ENCODE measurements at regions of chr5 and their contacts with region 1.

Region 1: GRCh38 chr5:76521240-76521758 is 101.9 kb downstream of the F2RL2 start:
- DNase-seq: no peak
- H3K4me3 ChIP-seq: no peak overlapping the region
- H3K4me3 Mint-ChIP-seq: peak overlapping the region; percentile 8 to 68 (median 24)
- H3K27ac ChIP-seq: no peak overlapping the region
- H3K27ac Mint-ChIP-seq: peak overlapping the region; percentile 57 to 90 (median 80)
- H3K4me1 ChIP-seq: peaks cover 57% of the 10 kb centered on the region
- H3K4me1 Mint-ChIP-seq: peaks cover 52 to 84% (median 70%) of the 10 kb centered on the region in 4 donors
- H3K27me3 ChIP-seq: no peaks in the 10 kb centered on the region
- H3K27me3 Mint-ChIP-seq: no peaks in the 10 kb centered on the region

Region 2: DNA sequence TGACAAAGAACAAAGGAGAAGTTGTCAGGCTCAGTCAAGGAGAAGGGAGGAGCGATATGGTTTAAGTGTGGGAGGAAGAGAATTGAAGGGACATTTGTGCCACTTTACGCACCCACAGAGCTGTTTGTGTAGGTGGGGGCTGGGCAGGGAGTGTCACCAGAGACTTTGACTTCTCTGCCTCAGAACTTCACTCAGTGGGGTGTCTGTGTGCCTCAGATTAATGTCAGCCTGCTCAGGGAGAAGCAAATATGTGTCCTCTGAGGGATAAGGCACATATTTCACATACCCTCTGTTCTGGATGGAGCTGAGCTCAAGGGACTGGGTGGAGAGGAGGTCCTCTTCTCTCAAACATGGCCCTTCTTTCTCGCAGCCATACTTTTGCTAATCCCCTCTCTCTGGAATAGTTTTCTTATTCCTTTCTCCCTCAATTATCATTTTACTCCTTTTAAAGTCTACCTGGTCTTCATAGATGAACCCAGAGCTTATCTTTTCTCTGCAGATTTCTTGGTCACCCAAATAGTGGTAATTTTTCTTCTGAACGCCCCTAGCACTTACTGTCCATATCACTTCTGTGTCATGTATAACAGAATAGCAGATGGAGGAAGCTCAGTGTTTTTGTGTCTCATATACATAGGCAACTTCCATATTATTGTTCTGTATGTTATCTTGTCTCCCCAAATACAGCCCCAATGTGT is 41.2 kb before region 1 on chr5:
- CTCF ChIA-PET with region 1: no interaction called
- POLR2A ChIA-PET with region 1: no interaction called
- intact Hi-C with region 1: loop called (anchors 5 kb)
- DNase-seq: no peak
- H3K4me3 ChIP-seq: no peak overlapping the region
- H3K4me3 Mint-ChIP-seq: peak overlapping the region in 2 of 8 donors; percentile 1 to 8
- H3K27ac ChIP-seq: no peak overlapping the region
- H3K27ac Mint-ChIP-seq: peak overlapping the region in 6 of 7 donors; percentile 3 to 89 (median 16)
- H3K4me1 ChIP-seq: peaks cover 64% of the 10 kb centered on the region
- H3K4me1 Mint-ChIP-seq: peaks cover 50 to 85% (median 67%) of the 10 kb centered on the region in 4 donors
- H3K27me3 ChIP-seq: no peaks in the 10 kb centered on the region
- H3K27me3 Mint-ChIP-seq: no peaks in the 10 kb centered on the region

Region 3: DNA sequence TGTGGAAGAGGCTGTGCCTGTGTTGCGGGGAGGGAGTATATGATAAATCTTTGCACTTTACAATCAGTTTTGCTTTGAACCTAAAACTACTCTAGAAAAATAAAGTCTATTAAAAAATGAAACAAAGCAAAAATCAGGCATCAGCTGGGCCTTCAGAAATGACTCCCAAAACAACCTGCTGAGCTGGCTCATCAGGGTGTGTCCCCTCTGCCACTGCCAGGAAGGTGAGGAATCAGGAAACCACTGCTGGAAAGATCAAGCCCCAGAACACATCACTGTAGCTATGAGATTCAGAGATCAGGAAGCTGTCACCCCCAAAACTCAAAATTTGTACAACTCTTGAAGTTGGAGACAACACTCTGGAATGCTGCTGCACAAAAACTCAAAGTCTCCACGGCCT is 1295.4 kb after region 1 on chr5:
- CTCF ChIA-PET with region 1: no interaction called
- POLR2A ChIA-PET with region 1: no interaction called
- intact Hi-C with region 1: no loop called
- DNase-seq: no peak
- H3K4me3 ChIP-seq: no peak overlapping the region
- H3K4me3 Mint-ChIP-seq: no peak overlapping the region
- H3K27ac ChIP-seq: no peak overlapping the region
- H3K27ac Mint-ChIP-seq: no peak overlapping the region
- H3K4me1 ChIP-seq: no peaks in the 10 kb centered on the region
- H3K4me1 Mint-ChIP-seq: no peaks in the 10 kb centered on the region
- H3K27me3 ChIP-seq: no peaks in the 10 kb centered on the region
- H3K27me3 Mint-ChIP-seq: peaks cover 3 to 9% of the 10 kb centered on the region in 2 donors

Measured in CD4-positive, alpha-beta memory T cell (primary cell).